Ascending aorta (tissue), 2 donors: ENCODE measurements at regions of chr2 and their contacts with region 1.

Region 1: GRCh38 chr2:9555297-9556141 is at the start of gene ADAM17:
- DNase-seq: peak; percentile 92 to 99
- H3K4me3 ChIP-seq: peak within 1 kb of the TSS; percentile 66 to 92
- H3K27ac ChIP-seq: peak within 1 kb of the TSS; percentile 95 to 99
- H3K4me1 ChIP-seq: peaks cover 15 to 49% of the 10 kb centered on the region in 2 donors
- H3K27me3 ChIP-seq: no peaks in the 10 kb centered on the region
- CTCF ChIP-seq: peak in 2 of 3 experiments; percentile 22 to 41
- total RNA-seq, gene ADAM17: 16.4 TPM

Region 2: DNA sequence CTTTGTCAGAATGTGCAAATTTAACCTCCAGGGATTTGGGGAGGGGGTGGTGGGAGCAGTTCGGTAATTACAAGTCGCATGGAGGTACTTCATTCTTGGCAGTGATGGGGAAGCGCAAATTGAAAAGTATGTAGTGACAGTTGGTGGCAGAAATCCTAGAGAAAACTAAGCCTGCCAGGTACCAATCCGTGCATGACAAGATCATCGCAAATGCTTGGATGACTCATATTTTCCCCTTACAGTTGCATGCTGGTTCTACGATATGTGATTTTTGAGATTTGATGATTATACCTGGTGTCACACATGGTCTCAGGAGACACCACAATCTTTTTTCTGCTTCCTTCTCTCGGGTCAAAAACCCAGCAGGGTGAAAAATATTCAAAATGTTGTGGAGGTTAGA is 1353.4 kb before region 1 on chr2:
- intact Hi-C with region 1: no loop called
- DNase-seq: no peak
- H3K4me3 ChIP-seq: no peak overlapping the region
- H3K27ac ChIP-seq: no peak overlapping the region
- H3K4me1 ChIP-seq: no peaks in the 10 kb centered on the region
- H3K27me3 ChIP-seq: no peaks in the 10 kb centered on the region
- CTCF ChIP-seq: no peak

Region 3: DNA sequence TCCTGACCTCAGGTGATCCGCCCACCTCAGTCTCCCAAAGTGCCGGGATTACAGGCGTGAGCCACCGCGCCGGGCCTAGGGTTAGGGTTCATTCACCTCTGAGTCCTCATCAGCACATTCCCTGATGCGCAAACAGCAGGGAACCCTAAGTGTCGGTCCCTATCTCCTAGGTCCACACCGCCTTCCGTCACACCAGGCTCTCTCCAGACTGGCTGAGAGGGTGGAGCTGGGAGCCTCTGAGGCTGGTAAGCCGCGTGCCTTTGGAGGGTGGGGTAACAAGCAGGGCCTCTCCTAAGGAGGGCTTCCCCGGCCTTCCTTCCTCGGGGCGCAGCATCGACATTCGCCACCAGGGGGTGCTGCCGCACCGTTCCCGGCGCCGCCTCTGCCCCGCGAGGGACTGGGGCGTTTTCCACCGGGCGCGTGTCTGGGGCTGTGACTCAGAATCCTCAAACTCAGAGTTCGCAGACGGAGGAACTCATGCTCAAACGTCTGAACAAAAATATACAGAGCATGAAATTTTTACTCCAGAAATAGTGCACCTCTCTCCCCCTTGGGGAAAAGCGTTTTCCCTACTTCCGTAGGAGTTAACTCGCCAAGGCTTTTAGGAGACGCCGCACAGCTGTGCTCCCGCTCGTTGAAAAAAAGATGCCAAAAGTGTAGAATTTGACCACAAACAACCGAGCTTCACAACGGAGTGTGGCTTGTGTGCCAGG is 412.8 kb before region 1 on chr2:
- intact Hi-C with region 1: loop called (anchors 10 kb)
- DNase-seq: peak; percentile 56 to 95
- H3K4me3 ChIP-seq: peak overlapping the region; percentile 2 to 38
- H3K27ac ChIP-seq: peak overlapping the region; percentile 74 to 82
- H3K4me1 ChIP-seq: peaks cover 0 to 14% of the 10 kb centered on the region in 2 donors
- H3K27me3 ChIP-seq: no peaks in the 10 kb centered on the region
- CTCF ChIP-seq: peak; percentile 98 to 99 (median 98)

Region 4: DNA sequence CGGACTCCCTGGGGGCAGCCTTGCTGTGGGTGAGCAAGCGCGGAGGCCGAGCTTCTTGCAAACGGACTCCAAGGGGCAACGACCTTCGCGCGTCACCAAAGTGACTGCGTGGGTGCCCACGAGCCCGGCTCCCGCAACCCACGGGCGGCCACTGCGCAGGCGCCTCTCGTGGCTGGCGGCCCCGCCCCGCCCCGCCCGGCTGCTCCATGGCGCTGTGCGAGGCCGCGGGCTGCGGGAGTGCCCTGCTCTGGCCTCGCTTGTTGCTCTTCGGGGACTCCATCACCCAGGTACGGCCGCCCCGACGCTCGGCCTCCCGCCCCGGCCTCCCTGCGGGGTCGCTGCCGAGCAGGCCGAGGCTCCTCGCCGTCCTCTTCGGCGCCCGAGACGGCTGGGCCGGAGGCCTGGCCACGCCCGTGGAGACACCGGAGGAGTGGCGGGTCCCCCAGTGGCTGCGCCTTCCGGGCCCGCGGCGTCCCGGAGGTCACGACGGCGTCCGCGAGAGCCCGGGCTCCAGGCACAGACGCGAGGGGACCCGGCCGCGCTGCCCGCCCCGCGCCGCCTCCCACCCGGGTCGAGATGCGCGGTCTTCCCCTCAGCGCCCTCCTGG is 81.1 kb before region 1 on chr2 and contains the start of gene IAH1:
- intact Hi-C with region 1: loop called (anchors 2 kb)
- DNase-seq: peak in 1 of 2 donors; percentile 84
- H3K4me3 ChIP-seq: peak within 1 kb of the TSS; percentile 77 to 90
- H3K27ac ChIP-seq: peak within 1 kb of the TSS; percentile 86 to 94
- H3K4me1 ChIP-seq: peaks cover 0 to 16% of the 10 kb centered on the region in 2 donors
- H3K27me3 ChIP-seq: no peaks in the 10 kb centered on the region
- CTCF ChIP-seq: no peak
- total RNA-seq, gene IAH1: 86.0 TPM

Region 5: GRCh38 chr2:9573840-9574239 is 18.3 kb after region 1 on chr2:
- intact Hi-C with region 1: loop called (anchors 2 kb)
- DNase-seq: no peak
- H3K4me3 ChIP-seq: no peak overlapping the region
- H3K27ac ChIP-seq: peak overlapping the region; percentile 92 to 93
- H3K4me1 ChIP-seq: peaks cover 4 to 19% of the 10 kb centered on the region in 2 donors
- H3K27me3 ChIP-seq: no peaks in the 10 kb centered on the region
- CTCF ChIP-seq: peak in 2 of 3 experiments; percentile 15 to 33

Region 6: GRCh38 chr2:9630749-9631483 is 75.4 kb after region 1 on chr2 and contains the start of gene YWHAQ:
- intact Hi-C with region 1: loop called (anchors 1 kb)
- DNase-seq: peak; percentile 97 to 100
- H3K4me3 ChIP-seq: peak within 1 kb of the TSS; percentile 79 to 95
- H3K27ac ChIP-seq: peak within 1 kb of the TSS; percentile 96 to 97
- H3K4me1 ChIP-seq: peaks cover 5 to 33% of the 10 kb centered on the region in 2 donors
- H3K27me3 ChIP-seq: no peaks in the 10 kb centered on the region
- CTCF ChIP-seq: no peak
- total RNA-seq, gene YWHAQ: 172 TPM

Region 7: DNA sequence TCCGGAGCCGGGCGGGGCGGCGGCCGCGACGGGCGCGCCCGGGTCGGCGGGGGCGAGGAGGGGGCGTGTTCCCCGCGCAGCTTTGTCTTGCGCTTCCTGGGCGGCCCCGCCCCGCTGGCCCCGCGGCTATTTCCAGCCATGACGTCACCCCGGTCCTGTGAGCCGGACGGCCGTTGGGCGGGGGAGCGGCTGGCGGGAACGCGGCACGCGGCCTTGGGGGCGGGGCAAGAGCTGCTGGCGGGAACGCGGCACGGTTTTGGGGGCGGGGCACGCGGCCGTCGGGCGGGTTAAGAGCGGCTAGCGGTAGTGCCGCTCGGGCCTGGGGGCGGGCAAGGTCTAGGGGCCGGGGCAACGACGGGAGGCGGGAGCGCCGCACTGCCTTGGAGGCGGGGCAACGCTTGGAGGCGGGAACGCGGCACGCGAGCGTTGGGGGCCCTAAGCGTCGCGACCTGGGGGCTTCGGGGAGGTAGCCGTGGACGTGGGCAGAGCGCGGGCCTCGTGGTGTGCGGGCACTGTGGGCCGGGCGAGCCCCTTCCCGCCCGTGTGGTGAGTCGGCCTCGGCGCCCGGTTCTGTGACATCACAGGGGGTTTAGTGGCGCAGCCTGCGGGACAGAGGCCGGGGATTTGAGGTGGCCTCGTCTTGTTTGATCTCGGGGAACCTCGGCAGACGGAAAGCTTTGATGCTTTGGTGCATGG is 488.5 kb after region 1 on chr2:
- intact Hi-C with region 1: loop called (anchors 5 kb)
- DNase-seq: peak; percentile 91 to 99
- H3K4me3 ChIP-seq: peak overlapping the region; percentile 65 to 81
- H3K27ac ChIP-seq: peak overlapping the region; percentile 97
- H3K4me1 ChIP-seq: peaks cover 6 to 41% of the 10 kb centered on the region in 2 donors
- H3K27me3 ChIP-seq: no peaks in the 10 kb centered on the region
- CTCF ChIP-seq: no peak